Calu3 (cell line): ENCODE measurements at regions of chr7 and their contacts with region 1.

Region 1: DNA sequence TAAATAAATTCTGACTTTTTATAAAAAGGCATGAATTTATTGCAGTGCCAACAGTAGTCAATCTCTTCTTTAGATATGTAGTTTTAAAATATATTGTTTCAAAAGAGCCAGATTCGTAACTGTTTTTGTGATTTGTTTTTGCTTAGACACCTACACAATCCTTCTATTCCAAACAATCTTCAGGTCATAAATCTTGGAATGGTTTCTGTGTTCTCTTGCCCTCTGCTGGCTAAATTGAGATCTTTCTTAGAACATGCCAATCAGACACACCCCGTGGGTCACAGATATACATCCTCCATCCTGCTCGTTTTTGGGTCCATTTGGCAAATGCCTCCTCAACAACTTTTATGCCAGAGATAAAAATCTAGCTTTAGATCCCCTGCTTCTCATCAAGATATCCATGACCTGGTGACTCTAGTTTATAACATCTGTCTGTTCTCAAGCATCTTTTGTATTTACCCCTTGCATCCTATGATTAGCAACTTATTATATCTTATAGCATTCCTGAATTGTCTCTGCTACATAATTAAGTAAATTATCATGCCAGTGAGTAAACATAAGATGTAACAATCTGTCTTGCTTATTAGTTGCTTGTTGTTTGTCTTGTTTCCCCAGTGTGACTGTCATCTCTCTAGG is 35.3 kb upstream of the IFRD1 start:
- DNase-seq: no peak
- H3K4me3 Mint-ChIP-seq: no peak overlapping the region
- H3K27ac Mint-ChIP-seq: no peak overlapping the region
- H3K4me1 Mint-ChIP-seq: no peaks in the 10 kb centered on the region
- H3K27me3 Mint-ChIP-seq: no peaks in the 10 kb centered on the region
- CTCF ChIP-seq: peak; percentile 43

Region 2: GRCh38 chr7:111741811-111742240 is 673.1 kb before region 1 on chr7:
- CTCF ChIA-PET with region 1: no interaction called
- intact Hi-C with region 1: loop called (anchors 2 kb)
- DNase-seq: peak; percentile 51
- H3K4me3 Mint-ChIP-seq: no peak overlapping the region
- H3K27ac Mint-ChIP-seq: no peak overlapping the region
- H3K4me1 Mint-ChIP-seq: peaks cover under 1% of the 10 kb centered on the region
- H3K27me3 Mint-ChIP-seq: no peaks in the 10 kb centered on the region
- CTCF ChIP-seq: peak; percentile 45

Region 3: GRCh38 chr7:111763221-111763801 is 651.7 kb before region 1 on chr7:
- CTCF ChIA-PET with region 1: no interaction called
- intact Hi-C with region 1: loop called (anchors 2 kb)
- DNase-seq: no peak
- H3K4me3 Mint-ChIP-seq: no peak overlapping the region
- H3K27ac Mint-ChIP-seq: no peak overlapping the region
- H3K4me1 Mint-ChIP-seq: no peaks in the 10 kb centered on the region
- H3K27me3 Mint-ChIP-seq: no peaks in the 10 kb centered on the region
- CTCF ChIP-seq: peak; percentile 31

Region 4: GRCh38 chr7:111855161-111855856 is 559.7 kb before region 1 on chr7:
- CTCF ChIA-PET with region 1: no interaction called
- intact Hi-C with region 1: loop called (anchors 5 kb)
- DNase-seq: peak; percentile 27
- H3K4me3 Mint-ChIP-seq: no peak overlapping the region
- H3K27ac Mint-ChIP-seq: no peak overlapping the region
- H3K4me1 Mint-ChIP-seq: peaks cover 14% of the 10 kb centered on the region
- H3K27me3 Mint-ChIP-seq: no peaks in the 10 kb centered on the region
- CTCF ChIP-seq: peak; percentile 26

Region 5: DNA sequence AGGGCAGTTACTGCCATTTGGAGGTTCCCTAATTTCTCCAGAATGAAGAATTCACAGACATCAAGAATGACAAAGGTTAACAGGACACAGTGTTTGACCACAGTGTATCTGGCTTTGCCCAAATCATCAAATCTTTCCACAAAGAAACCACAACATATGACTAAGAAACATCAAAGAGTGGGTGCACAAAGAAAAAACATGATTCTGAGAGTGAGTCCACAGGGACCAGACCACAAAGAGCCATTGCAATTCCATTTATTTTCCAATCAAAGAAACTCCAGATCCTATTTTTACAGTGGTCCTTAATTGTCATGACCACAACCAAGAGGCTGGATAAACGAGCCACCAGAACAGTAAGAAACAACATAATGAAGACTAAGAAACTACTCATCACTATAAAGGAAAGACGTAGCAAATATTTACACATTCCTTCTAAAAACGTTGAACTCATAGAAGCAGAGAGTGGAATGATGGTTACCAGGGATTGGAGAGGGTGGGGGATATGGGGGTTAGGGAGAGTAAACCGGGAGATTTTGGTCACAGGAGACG is 495.3 kb before region 1 on chr7:
- CTCF ChIA-PET with region 1: no interaction called
- intact Hi-C with region 1: loop called (anchors 10 kb)
- DNase-seq: no peak
- H3K4me3 Mint-ChIP-seq: no peak overlapping the region
- H3K27ac Mint-ChIP-seq: no peak overlapping the region
- H3K4me1 Mint-ChIP-seq: no peaks in the 10 kb centered on the region
- H3K27me3 Mint-ChIP-seq: no peaks in the 10 kb centered on the region
- CTCF ChIP-seq: no peak

Region 6: DNA sequence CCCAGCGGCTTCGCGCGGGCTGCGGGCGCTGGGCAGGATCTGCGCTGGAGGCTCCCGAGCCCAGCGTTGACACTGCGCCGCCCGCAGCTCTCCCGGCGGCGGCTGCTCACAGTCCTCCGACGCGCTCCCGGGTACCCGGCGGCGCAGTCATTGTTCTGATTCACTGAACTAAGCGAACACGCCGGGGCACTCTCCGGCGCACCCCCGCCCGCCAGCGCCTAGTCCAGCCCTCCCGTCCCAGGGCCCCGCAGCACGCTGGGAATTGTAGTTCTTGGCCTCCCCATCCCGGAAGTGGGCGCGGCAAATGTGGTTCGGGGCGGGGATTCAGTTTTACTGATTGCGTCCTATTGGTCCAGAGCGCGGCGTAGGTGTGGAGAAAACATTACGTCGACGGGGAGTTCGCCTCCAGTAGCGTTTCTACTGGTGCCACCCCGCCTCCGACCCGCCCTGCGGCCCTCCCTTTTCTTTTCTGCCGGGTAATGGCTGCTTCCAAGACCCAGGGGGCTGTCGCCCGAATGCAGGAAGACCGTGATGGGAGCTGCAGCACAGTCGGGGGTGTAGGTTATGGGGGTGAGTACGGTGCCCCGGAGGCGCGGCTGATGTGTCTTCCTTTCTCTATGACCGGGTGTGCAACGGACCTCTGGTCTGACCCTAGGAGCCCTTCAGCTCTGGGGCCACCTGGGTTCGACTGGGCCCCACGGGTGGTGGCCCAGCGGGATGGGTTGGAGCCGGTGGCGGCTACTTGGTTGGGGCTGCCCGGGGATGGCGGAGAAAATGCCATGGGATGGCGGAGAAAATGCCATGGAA is 208.5 kb before region 1 on chr7 and contains the starts of genes DOCK4 and ZNF277:
- CTCF ChIA-PET with region 1: no interaction called
- intact Hi-C with region 1: loop called (anchors 10 kb)
- DNase-seq: peak; percentile 97
- H3K4me3 Mint-ChIP-seq: peak within 1 kb of the TSS; percentile 96
- H3K27ac Mint-ChIP-seq: peak within 1 kb of the TSS; percentile 76
- H3K4me1 Mint-ChIP-seq: peaks cover 26% of the 10 kb centered on the region
- H3K27me3 Mint-ChIP-seq: peaks cover 26% of the 10 kb centered on the region
- CTCF ChIP-seq: no peak
- total RNA-seq, gene DOCK4: 2.7 and 3.4 TPM in 2 replicates
- total RNA-seq, gene ZNF277: 18.1 and 18.4 TPM in 2 replicates

Region 7: GRCh38 chr7:112346381-112347060 is 68.5 kb before region 1 on chr7:
- CTCF ChIA-PET with region 1: no interaction called
- intact Hi-C with region 1: no loop called
- DNase-seq: no peak
- H3K4me3 Mint-ChIP-seq: no peak overlapping the region
- H3K27ac Mint-ChIP-seq: no peak overlapping the region
- H3K4me1 Mint-ChIP-seq: no peaks in the 10 kb centered on the region
- H3K27me3 Mint-ChIP-seq: no peaks in the 10 kb centered on the region
- CTCF ChIP-seq: no peak

Region 8: DNA sequence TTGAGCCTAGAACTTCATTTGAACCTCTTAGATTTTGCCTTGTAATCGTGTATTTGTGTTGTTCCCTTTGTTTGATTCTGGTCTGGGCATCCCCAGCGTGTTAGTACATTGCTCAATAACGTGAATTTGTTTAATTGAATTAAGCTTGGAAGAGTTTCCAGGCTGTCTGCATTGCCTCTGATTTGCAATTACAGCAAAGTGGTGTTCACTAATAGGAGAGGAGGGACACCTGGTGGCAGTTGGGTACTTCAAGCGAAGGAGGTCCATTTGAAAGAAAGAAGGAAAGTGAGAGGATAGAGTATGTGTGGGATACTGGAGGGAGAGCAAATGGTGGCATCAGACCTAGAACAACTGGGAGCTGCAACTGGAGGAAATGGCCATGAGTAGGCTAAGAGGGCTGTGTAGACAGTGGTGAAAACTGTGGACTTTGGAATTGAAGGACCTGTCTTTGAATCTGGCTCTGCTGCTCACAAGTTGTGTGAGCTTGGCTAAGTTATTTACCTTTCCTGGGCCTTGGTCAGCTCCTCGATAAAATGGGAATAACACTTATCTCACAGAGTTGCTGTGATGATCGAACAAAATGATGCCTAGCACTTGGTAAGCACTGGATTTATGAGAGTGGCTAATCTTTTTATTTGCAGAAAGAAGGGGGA is 81.0 kb after region 1 on chr7:
- CTCF ChIA-PET with region 1: no interaction called
- intact Hi-C with region 1: loop called (anchors 5 kb)
- DNase-seq: peak; percentile 63
- H3K4me3 Mint-ChIP-seq: no peak overlapping the region
- H3K27ac Mint-ChIP-seq: no peak overlapping the region
- H3K4me1 Mint-ChIP-seq: peaks cover 9% of the 10 kb centered on the region
- H3K27me3 Mint-ChIP-seq: peaks cover 28% of the 10 kb centered on the region
- CTCF ChIP-seq: peak; percentile 39